ENCODE measurements at regions of chr3 and their contacts with region 1.

Region 1: DNA sequence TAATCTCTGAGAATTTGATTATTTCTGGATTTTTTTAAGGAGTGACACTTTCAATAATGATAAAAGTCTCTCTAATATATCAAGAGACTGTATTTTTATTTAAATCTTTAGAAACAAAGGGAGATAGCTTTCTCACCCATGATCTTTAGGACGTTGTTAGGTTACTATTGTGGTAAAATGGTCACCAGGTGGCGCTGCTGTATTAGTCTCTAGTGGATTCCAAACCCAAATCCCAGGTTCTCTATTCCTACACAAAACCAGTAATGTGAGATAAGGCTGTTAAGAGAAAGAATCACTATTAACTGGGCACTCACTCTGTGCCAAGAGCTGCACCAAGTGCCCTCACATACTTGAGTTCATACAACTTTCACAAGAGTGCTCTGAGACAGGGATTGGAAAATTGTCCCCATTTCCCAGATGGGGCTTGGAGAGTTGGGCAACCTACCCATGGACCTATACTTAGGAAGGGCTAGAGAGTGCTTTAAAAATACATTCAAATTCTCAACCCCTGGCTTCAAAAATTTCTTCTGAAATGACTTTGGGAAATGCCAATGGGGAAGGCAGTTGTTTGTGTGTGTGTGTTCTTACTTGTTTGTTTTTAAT is 593.4 kb upstream of the TGFBR2 start:
- DNase-seq: peak; percentile 48
- H3K4me3 Mint-ChIP-seq: no peak overlapping the region
- H3K27ac Mint-ChIP-seq: no peak overlapping the region
- H3K4me1 Mint-ChIP-seq: no peaks in the 10 kb centered on the region
- H3K27me3 Mint-ChIP-seq: peaks cover 11% of the 10 kb centered on the region

Region 2: GRCh38 chr3:30002797-30003196 is 10.2 kb before region 1 on chr3:
- CTCF ChIA-PET with region 1: interaction called, 13 read pairs
- POLR2A ChIA-PET with region 1: no interaction called
- intact Hi-C with region 1: no loop called
- DNase-seq: no peak
- H3K4me3 Mint-ChIP-seq: no peak overlapping the region
- H3K27ac Mint-ChIP-seq: no peak overlapping the region
- H3K4me1 Mint-ChIP-seq: no peaks in the 10 kb centered on the region
- H3K27me3 Mint-ChIP-seq: peaks cover 1% of the 10 kb centered on the region

Measured in activated CD4-positive, alpha-beta memory T cell treated with anti-CD3 and anti-CD28 coated beads for 36 hours (primary cell).